CD4-positive, alpha-beta T cell (primary cell): ENCODE measurements at regions of chr1 and their contacts with region 1.

Region 1: DNA sequence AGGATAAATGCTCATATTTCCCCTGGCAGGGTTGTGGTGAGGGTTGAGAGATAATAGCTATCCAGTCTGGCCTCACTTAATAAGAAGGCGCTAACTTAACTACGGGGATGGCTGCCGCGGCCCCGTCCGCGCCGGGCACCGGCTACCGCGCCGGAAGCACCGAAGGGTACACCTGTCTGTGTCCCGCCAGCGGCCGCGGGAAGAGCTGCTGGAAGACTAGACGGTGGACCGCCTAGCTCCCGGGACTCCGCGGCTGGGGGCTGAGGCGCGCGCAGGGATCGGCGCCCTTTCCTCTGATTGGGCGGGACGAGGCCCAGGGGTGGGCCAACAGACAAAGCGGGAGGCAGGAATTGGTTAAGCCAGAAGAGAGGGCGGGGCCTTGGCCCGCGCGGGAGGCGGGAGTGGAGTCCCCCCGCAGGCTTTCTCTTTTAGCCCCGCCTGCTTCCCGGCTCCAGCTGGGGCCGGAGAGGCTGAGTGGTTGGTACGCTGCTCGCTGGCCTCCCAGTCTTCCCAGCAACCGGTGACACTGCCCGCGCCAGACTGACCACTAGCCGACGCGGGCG is at the start of gene ZNF672:
- DNase-seq: peak; percentile 81 to 96 (median 92)
- ATAC-seq: peak; percentile 85
- H3K4me3 ChIP-seq: peak within 1 kb of the TSS; percentile 81
- H3K4me3 Mint-ChIP-seq: no peak within 1 kb of the TSS
- H3K27ac ChIP-seq: peak within 1 kb of the TSS; percentile 94 to 99
- H3K27ac Mint-ChIP-seq: no peak within 1 kb of the TSS
- H3K4me1 ChIP-seq: peaks cover 37% of the 10 kb centered on the region
- H3K4me1 Mint-ChIP-seq: peaks cover 30% of the 10 kb centered on the region
- H3K27me3 ChIP-seq: no peaks in the 10 kb centered on the region
- H3K27me3 Mint-ChIP-seq: peaks cover 7% of the 10 kb centered on the region
- CTCF ChIP-seq: no peak
- total RNA-seq, gene ZNF672: 35.9 to 38.4 TPM

Region 2: DNA sequence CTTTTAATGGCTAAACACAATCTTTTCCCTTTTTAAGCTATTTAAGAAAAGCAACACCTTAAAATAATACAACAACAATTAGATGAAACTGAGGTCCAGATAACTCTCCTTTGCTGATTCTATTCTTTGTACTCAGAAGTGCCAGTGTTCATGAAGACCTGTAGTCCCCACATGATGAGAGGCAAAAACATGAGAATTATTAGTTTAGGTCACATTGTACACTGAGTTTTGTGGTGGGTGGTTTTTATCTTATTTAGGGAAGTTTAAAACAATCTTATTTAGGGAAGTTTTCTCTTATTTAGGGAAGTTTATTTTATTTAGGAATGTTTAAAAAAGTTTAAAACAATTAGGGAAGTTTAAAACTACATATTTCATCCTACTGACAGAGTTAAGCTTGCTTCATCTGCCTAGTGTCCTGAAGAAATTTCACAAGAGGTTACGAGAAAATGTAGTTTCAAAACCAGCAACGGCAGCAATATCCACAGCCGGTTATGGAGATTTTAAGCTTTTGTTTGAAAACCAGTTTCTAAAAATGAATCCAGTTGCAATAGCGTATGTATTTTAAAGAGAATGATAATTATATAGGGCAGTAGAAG is 127.5 kb before region 1 on chr1:
- CTCF ChIA-PET with region 1: no interaction called
- POLR2A ChIA-PET with region 1: no interaction called
- intact Hi-C with region 1: no loop called
- DNase-seq: no peak
- ATAC-seq: no peak
- H3K4me3 ChIP-seq: no peak overlapping the region
- H3K4me3 Mint-ChIP-seq: no peak overlapping the region
- H3K27ac ChIP-seq: no peak overlapping the region
- H3K27ac Mint-ChIP-seq: no peak overlapping the region
- H3K4me1 ChIP-seq: no peaks in the 10 kb centered on the region
- H3K4me1 Mint-ChIP-seq: no peaks in the 10 kb centered on the region
- H3K27me3 ChIP-seq: peaks cover 3 to 12% of the 10 kb centered on the region in 2 experiments
- H3K27me3 Mint-ChIP-seq: peaks cover 14% of the 10 kb centered on the region
- CTCF ChIP-seq: no peak

Region 3: DNA sequence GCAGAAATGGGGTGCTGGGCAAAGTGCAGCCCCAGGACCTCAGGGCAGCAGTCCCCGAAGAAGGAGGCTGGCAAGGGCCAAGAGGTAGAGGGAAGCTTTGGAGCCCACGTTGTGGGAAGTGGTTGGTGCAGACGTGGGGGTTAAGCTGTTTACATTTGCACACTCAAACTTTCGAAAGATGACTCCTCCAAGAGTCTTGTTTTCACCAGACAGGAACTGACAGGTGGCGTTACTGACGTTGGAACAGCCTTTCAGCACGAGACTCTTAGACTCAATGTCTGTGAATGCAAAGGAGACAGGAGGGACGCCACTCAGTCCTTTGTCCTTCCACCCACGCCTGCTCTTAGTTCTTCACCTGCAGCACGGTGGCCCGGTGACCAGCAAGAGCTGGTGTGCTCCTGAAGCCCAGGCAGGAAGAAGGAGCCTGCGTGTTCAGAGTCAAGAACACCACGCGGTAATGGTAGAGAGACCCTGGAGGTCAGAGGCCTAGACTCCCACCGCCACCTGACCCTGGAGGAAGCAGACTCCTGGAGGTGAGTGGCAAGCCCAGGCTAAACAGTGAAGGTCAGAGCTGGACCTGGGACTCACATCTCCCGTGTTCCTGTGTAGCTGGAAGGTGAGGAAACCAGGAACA is 98.2 kb before region 1 on chr1:
- CTCF ChIA-PET with region 1: no interaction called
- POLR2A ChIA-PET with region 1: no interaction called
- intact Hi-C with region 1: no loop called
- DNase-seq: no peak
- ATAC-seq: no peak
- H3K4me3 ChIP-seq: no peak overlapping the region
- H3K4me3 Mint-ChIP-seq: no peak overlapping the region
- H3K27ac ChIP-seq: no peak overlapping the region
- H3K27ac Mint-ChIP-seq: no peak overlapping the region
- H3K4me1 ChIP-seq: no peaks in the 10 kb centered on the region
- H3K4me1 Mint-ChIP-seq: no peaks in the 10 kb centered on the region
- H3K27me3 ChIP-seq: no peaks in the 10 kb centered on the region
- H3K27me3 Mint-ChIP-seq: peaks cover 7% of the 10 kb centered on the region
- CTCF ChIP-seq: no peak

Region 4: GRCh38 chr1:248873409-248873992 is 35.6 kb after region 1 on chr1:
- CTCF ChIA-PET with region 1: no interaction called
- POLR2A ChIA-PET with region 1: interaction called, 36 read pairs
- intact Hi-C with region 1: no loop called
- DNase-seq: peak; percentile 77 to 95 (median 91)
- ATAC-seq: peak; percentile 75
- H3K4me3 ChIP-seq: peak overlapping the region; percentile 71
- H3K4me3 Mint-ChIP-seq: peak overlapping the region; percentile 99
- H3K27ac ChIP-seq: peak overlapping the region; percentile 52 to 79
- H3K27ac Mint-ChIP-seq: peak overlapping the region; percentile 99
- H3K4me1 ChIP-seq: peaks cover 22% of the 10 kb centered on the region
- H3K4me1 Mint-ChIP-seq: peaks cover 35% of the 10 kb centered on the region
- H3K27me3 ChIP-seq: no peaks in the 10 kb centered on the region
- H3K27me3 Mint-ChIP-seq: peaks cover 14% of the 10 kb centered on the region
- CTCF ChIP-seq: no peak

Region 5: GRCh38 chr1:248884632-248885295 is 46.9 kb after region 1 on chr1:
- CTCF ChIA-PET with region 1: no interaction called
- POLR2A ChIA-PET with region 1: no interaction called
- intact Hi-C with region 1: no loop called
- DNase-seq: no peak
- ATAC-seq: no peak
- H3K4me3 ChIP-seq: no peak overlapping the region
- H3K4me3 Mint-ChIP-seq: no peak overlapping the region
- H3K27ac ChIP-seq: no peak overlapping the region
- H3K27ac Mint-ChIP-seq: no peak overlapping the region
- H3K4me1 ChIP-seq: no peaks in the 10 kb centered on the region
- H3K4me1 Mint-ChIP-seq: no peaks in the 10 kb centered on the region
- H3K27me3 ChIP-seq: peaks cover 0 to 3% of the 10 kb centered on the region in 2 experiments
- H3K27me3 Mint-ChIP-seq: no peaks in the 10 kb centered on the region
- CTCF ChIP-seq: no peak